Activated CD4-positive, alpha-beta T cell treated with anti-CD3 and anti-CD28 coated beads for 36 hours (primary cell): ENCODE measurements at regions of chr20 and their contacts with region 1.

Region 1: DNA sequence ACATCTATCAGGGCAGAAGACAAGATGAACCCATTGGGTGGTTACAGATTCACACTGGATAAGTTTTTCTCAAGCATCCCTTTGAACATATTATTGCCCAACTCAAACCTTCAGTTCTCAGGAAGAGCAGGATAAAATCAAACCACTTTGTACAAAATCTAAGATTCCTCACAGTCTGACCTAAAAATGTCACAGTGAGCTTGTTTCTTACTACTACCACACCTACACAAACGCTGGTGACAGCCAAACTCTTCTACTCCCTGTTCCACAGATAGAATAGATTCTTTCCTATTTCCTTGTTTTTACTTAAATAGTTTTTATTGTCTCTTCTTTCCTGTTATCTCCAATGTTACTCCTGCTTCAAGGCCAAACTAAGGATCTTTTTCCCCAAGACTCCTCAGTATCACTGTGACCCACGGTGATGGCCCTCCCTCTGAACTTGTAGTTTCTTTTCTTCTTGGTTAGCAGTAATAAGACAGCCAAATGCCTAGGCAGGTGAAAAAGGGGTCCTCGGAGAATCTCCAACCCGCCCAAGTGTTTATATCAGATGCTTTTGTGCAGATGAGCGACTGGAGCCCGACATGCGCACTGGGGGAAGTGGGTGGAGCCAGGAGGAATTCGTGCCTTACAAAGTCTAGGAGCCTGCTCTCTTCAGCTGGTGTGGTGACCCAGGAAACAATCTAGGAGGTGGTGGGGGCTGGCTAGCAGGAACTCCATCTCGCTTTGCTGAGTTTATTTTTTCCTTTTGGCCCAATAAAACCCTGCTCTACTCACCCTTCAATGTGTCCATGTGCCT is 53.4 kb downstream of the SEL1L2 start:
- DNase-seq: no peak
- ATAC-seq: no peak
- H3K4me3 Mint-ChIP-seq: no peak overlapping the region
- H3K27ac Mint-ChIP-seq: no peak overlapping the region
- H3K4me1 Mint-ChIP-seq: no peaks in the 10 kb centered on the region
- H3K27me3 Mint-ChIP-seq: peaks cover 5% of the 10 kb centered on the region

Region 2: DNA sequence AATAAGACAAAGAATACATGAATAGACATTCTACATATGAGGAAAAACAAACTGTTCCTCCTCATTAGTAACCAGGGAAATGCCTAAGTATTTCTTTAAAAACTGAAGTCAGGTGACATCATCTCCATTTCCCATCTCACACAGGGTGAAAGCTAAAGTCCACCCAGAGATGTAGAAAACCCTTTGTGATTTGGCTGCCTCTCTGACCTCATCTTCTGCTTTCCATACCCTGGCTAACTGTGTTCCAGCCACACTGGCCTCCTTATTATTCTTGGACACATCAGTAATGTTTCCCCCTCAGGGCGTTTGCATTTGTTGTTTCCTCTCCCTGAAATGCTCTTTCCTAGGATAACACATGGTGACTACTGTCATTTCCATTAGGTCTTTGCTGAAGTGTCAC is 192.6 kb before region 1 on chr20:
- CTCF ChIA-PET with region 1: no interaction called
- POLR2A ChIA-PET with region 1: no interaction called
- intact Hi-C with region 1: no loop called
- DNase-seq: no peak
- ATAC-seq: no peak
- H3K4me3 Mint-ChIP-seq: no peak overlapping the region
- H3K27ac Mint-ChIP-seq: no peak overlapping the region
- H3K4me1 Mint-ChIP-seq: peaks cover 4% of the 10 kb centered on the region
- H3K27me3 Mint-ChIP-seq: no peaks in the 10 kb centered on the region

Region 3: GRCh38 chr20:13755809-13756208 is 181.2 kb before region 1 on chr20:
- CTCF ChIA-PET with region 1: no interaction called
- POLR2A ChIA-PET with region 1: no interaction called
- intact Hi-C with region 1: no loop called
- DNase-seq: no peak
- ATAC-seq: no peak
- H3K4me3 Mint-ChIP-seq: no peak overlapping the region
- H3K27ac Mint-ChIP-seq: no peak overlapping the region
- H3K4me1 Mint-ChIP-seq: no peaks in the 10 kb centered on the region
- H3K27me3 Mint-ChIP-seq: no peaks in the 10 kb centered on the region

Region 4: DNA sequence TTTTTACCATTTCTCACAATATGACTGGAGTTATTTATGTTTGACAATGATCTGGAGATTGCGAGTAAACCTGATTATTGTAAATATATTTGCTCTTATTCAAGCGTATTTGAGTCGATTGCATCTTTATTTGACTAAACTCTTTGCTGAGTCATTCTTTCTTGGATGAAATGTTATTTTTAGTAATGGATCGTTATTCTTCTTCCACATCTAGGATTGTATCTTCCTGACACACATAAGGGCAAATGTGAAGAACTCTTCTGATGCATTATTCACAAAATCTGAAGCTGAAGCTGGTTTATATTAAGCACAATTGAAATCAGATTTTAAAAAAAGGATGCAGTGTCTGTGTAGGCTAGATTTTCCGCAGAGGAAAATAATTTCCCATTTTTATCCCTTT is 14.7 kb before region 1 on chr20:
- CTCF ChIA-PET with region 1: no interaction called
- POLR2A ChIA-PET with region 1: no interaction called
- intact Hi-C with region 1: no loop called
- DNase-seq: no peak
- ATAC-seq: no peak
- H3K4me3 Mint-ChIP-seq: no peak overlapping the region
- H3K27ac Mint-ChIP-seq: no peak overlapping the region
- H3K4me1 Mint-ChIP-seq: no peaks in the 10 kb centered on the region
- H3K27me3 Mint-ChIP-seq: peaks cover 2% of the 10 kb centered on the region

Region 5: GRCh38 chr20:13984211-13984610 is 47.2 kb after region 1 on chr20:
- CTCF ChIA-PET with region 1: no interaction called
- POLR2A ChIA-PET with region 1: no interaction called
- intact Hi-C with region 1: loop called in 1 of 2 experiments (anchors 1 kb)
- DNase-seq: no peak
- ATAC-seq: no peak
- H3K4me3 Mint-ChIP-seq: no peak overlapping the region
- H3K27ac Mint-ChIP-seq: no peak overlapping the region
- H3K4me1 Mint-ChIP-seq: no peaks in the 10 kb centered on the region
- H3K27me3 Mint-ChIP-seq: no peaks in the 10 kb centered on the region

Region 6: DNA sequence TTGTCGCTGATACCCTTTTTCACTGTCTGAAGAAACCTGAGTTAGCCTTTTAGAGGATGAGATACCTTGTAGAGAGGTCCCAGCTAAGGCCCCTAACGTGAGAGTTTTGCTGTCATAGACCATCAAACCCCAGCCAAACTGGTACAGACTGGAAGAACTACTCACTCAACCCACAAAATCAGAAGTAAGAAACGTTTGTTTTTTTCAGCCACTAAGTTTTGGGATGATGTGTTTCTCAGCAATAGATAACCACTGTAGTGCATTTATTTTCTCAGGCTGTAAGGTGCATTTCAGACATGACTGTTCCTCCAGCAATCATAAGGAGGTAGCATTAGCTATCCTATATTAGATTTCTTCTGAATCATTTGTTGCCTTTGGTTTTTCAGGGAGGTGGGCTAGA is 807.7 kb after region 1 on chr20:
- CTCF ChIA-PET with region 1: no interaction called
- POLR2A ChIA-PET with region 1: no interaction called
- intact Hi-C with region 1: no loop called
- DNase-seq: no peak
- ATAC-seq: no peak
- H3K4me3 Mint-ChIP-seq: no peak overlapping the region
- H3K27ac Mint-ChIP-seq: no peak overlapping the region
- H3K4me1 Mint-ChIP-seq: no peaks in the 10 kb centered on the region
- H3K27me3 Mint-ChIP-seq: no peaks in the 10 kb centered on the region